Activated B cell treated with CpG ODN at 0.5 μM for 24 hours (primary cell): ENCODE measurements at regions of chr9 and their contacts with region 1.

Region 1: GRCh38 chr9:97803167-97804058 is 49.6 kb upstream of the FOXE1 start:
- DNase-seq: peak; percentile 65
- ATAC-seq: peak; percentile 95
- H3K4me3 Mint-ChIP-seq: peak overlapping the region; percentile 81
- H3K27ac Mint-ChIP-seq: no peak overlapping the region
- H3K4me1 Mint-ChIP-seq: peaks cover 7% of the 10 kb centered on the region
- H3K27me3 Mint-ChIP-seq: peaks cover 19% of the 10 kb centered on the region
- CTCF ChIP-seq: no peak

Region 2: GRCh38 chr9:97848582-97849237 is 45.3 kb after region 1 on chr9:
- CTCF ChIA-PET with region 1: no interaction called
- POLR2A ChIA-PET with region 1: no interaction called
- intact Hi-C with region 1: loop called (anchors 5 kb)
- DNase-seq: no peak
- ATAC-seq: no peak
- H3K4me3 Mint-ChIP-seq: peak overlapping the region; percentile 81
- H3K27ac Mint-ChIP-seq: no peak overlapping the region
- H3K4me1 Mint-ChIP-seq: peaks cover 26% of the 10 kb centered on the region
- H3K27me3 Mint-ChIP-seq: peaks cover 63% of the 10 kb centered on the region
- CTCF ChIP-seq: no peak

Region 3: DNA sequence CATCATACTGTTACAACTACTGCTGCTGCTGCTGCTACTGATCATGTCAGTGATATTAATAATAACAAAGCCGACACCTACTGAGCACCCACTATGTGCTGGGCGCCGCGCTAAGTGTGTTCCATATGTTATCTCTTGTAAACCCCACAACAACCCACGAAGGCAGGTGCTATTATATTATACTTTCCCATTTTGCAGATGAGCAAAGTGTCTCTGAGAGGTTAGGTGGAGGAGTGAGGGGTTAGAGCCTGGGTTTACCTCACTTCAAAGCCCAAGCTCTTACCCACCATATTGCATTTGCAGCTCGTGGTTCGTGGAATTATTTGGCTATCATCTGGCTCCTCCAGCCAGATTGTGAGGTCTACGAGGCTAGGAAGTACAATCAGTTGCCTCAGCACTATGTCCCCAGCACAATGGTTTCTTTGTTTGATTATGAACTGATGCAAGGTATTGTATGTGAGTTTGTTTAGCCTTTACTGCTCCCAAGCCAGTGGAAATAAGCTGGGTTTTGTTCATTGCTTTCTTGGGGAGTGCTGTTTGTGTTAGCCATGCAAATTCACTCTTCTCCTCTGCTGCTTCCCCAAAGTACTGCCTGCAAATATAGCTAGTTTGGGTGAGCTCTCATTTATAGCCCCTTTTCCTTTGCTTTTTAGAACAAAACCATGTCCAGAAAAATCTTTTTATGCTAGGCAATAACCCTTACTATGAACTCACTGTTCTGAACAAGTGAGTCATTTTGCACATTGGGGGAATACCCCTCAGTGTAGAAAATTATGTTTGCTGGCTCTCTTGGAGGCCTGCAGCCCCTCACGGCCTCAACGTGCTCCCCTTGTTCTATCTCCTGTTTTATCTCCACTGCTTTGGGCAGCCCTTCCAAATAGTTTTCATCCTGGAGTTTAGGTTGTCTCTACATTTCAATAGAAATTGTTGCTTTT is 1370.4 kb after region 1 on chr9:
- CTCF ChIA-PET with region 1: no interaction called
- POLR2A ChIA-PET with region 1: no interaction called
- intact Hi-C with region 1: no loop called
- DNase-seq: no peak
- ATAC-seq: peak; percentile 60
- H3K4me3 Mint-ChIP-seq: no peak overlapping the region
- H3K27ac Mint-ChIP-seq: no peak overlapping the region
- H3K4me1 Mint-ChIP-seq: peaks cover 46% of the 10 kb centered on the region
- H3K27me3 Mint-ChIP-seq: no peaks in the 10 kb centered on the region
- CTCF ChIP-seq: no peak